A549 (cell line): ENCODE measurements at regions of chr10 and their contacts with region 1.

Region 1: DNA sequence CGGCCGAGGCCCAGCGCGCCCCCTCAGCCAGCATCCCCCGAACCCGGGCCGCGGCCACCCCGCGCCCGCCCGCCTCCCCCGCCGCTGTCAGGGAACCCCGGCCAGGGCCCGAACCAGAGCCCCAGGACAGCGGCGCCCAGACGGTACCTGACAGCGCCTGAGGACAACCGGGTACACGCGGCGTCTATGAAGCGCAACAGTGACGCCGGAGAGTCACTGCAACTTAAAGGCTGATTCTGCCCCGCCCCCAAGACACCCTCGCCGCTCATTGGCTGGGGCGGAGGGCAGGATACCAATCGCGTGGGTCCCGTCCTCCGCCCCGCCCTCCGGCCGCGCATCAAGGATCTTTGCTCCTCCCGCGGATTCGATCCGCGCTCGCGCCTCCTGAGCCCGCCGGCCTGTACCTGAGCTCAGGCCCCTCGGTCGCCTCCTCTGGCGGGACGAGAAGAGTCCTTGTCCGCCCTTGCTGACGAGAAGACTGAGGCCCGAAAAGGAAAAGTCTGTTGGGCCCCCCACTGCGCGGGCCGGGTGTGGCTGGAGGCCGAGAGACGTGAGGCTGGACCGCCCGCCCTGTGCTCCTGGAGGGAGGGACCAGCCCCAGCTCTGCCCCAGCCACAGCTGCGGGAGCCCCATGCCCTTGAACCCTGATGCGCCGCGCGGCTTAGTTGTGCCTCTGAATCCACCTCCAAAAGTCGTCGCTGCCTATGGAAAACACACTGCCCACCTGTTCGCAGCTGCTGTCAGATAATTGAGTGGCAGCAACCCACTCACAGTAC is at the start of gene OAT:
- DNase-seq: peak; percentile 96 to 98
- ATAC-seq: peak; percentile 95 to 97
- H3K4me3 ChIP-seq: peak within 1 kb of the TSS; percentile 85
- H3K27ac ChIP-seq: peak within 1 kb of the TSS; percentile 76 to 93
- H3K4me1 ChIP-seq: peaks cover 21% of the 10 kb centered on the region
- CTCF ChIP-seq: no peak
- EP300 ChIP-seq: no peak
- POLR2A ChIP-seq: peak; percentile 98
- RAD21 ChIP-seq: no peak
- polyA plus RNA-seq, gene OAT: 82.6 and 97.6 TPM in 2 replicates

Region 2: GRCh38 chr10:124403548-124403947 is 15.4 kb before region 1 on chr10:
- CTCF ChIA-PET with region 1: interaction called, 12 read pairs
- POLR2A ChIA-PET with region 1: interaction called, 25 read pairs
- DNase-seq: peak; percentile 67 to 86
- ATAC-seq: peak; percentile 100
- H3K4me3 ChIP-seq: no peak overlapping the region
- H3K27ac ChIP-seq: no peak overlapping the region
- H3K4me1 ChIP-seq: no peaks in the 10 kb centered on the region
- CTCF ChIP-seq: peak; percentile 66
- EP300 ChIP-seq: no peak
- POLR2A ChIP-seq: no peak
- RAD21 ChIP-seq: peak; percentile 54 to 66; a peak in 3 of 5 replicates

Region 3: GRCh38 chr10:124461438-124462347 is 42.8 kb after region 1 on chr10 and contains the start of gene LHPP:
- CTCF ChIA-PET with region 1: interaction called, 4 read pairs
- POLR2A ChIA-PET with region 1: interaction called, 12 read pairs
- DNase-seq: peak; percentile 85 to 91
- ATAC-seq: peak; percentile 98 to 99
- H3K4me3 ChIP-seq: peak within 1 kb of the TSS; percentile 66
- H3K27ac ChIP-seq: peak within 1 kb of the TSS; percentile 95 to 96
- H3K4me1 ChIP-seq: peaks cover 10% of the 10 kb centered on the region; the same call in 1 of the 3 replicates
- CTCF ChIP-seq: no peak
- EP300 ChIP-seq: no peak
- POLR2A ChIP-seq: peak; percentile 89
- RAD21 ChIP-seq: no peak
- polyA plus RNA-seq, gene LHPP: 18.6 and 21.7 TPM in 2 replicates